SK-N-SH (cell line): ENCODE measurements at regions of chr17 and their contacts with region 1.

Region 1: DNA sequence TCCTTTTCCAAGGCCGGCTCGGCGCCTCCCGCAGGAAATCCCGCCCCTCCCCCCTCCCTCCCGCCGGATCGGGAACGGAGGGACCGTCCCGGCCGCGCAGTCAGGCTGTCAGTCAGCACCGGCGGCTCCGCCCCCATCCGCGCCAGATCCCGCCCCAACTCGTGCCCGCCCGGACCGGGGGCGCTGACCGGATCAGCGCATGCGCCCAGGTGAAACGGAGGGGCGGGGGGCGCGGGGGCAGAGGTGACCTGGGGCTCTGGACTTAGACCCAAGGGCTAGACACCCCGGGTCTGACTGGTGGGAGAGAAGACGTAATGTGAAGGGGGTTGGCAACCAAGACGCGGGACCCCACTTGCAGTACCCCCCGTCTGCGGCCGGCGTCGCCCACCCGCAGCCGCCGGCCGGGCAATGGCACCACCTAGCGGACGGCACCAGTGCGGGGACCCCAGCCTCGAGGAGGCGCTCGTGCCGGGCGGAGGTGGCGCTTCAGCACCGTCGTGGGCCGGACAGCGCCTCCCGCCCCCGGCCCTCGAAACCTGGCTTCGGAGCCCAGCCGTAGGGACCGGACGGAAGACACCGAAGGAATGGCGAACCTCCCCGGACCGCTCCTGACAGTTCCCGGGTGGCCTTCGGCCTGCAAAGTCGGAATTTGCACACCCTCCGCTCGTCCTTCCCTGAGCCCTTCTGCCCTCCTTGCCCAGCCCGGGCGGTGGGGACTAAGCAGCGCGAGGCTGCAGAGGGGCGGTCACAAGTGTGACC is at the start of gene CASKIN2:
- DNase-seq: peak; percentile 100
- H3K4me3 ChIP-seq: peak within 1 kb of the TSS; percentile 81 to 98
- H3K27ac ChIP-seq: peak within 1 kb of the TSS; percentile 45 to 88; a peak in 3 of 4 replicates
- H3K4me1 ChIP-seq: peaks cover 0 to 33% of the 10 kb centered on the region in 2 experiments; a peak in 1 of 4 replicates
- H3K27me3 ChIP-seq: no peaks in the 10 kb centered on the region
- CTCF ChIP-seq: peak; percentile 100
- EP300 ChIP-seq: no peak; a peak in 1 of 4 replicates
- RAD21 ChIP-seq: peak; percentile 71
- polyA plus RNA-seq, gene CASKIN2: 5.2 and 6.5 TPM in 2 replicates

Region 2: DNA sequence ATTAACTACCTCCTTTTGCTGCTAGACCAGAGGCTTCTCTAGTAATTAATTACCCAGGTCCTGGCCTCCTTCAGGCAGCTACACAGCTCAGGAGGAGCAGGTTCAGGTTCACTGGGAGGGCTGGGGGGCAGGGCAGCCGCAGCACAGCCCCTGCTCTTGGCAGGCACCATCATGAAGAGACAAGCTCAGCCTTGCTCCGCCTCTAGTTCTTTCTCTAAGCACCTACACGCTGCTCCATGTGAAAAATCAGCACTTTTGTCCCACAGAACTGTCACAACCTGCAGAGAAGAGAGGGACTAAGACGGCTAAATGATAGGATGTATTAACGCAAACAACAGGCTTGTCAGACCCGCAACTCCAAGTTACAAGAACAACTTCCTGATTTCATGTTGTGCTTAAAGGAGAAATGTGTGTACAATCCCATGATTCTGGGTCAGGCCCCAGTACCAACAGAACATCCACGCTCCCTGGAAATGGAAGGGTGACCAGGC is 163.6 kb before region 1 on chr17:
- CTCF ChIA-PET with region 1: no interaction called
- POLR2A ChIA-PET with region 1: no interaction called
- DNase-seq: peak; percentile 30
- H3K4me3 ChIP-seq: no peak overlapping the region
- H3K27ac ChIP-seq: no peak overlapping the region; a peak in 1 of 4 replicates
- H3K4me1 ChIP-seq: peaks cover 6 to 8% of the 10 kb centered on the region in 2 experiments; a peak in 1 of 4 replicates
- H3K27me3 ChIP-seq: no peaks in the 10 kb centered on the region
- CTCF ChIP-seq: no peak
- EP300 ChIP-seq: no peak
- RAD21 ChIP-seq: no peak

Region 3: DNA sequence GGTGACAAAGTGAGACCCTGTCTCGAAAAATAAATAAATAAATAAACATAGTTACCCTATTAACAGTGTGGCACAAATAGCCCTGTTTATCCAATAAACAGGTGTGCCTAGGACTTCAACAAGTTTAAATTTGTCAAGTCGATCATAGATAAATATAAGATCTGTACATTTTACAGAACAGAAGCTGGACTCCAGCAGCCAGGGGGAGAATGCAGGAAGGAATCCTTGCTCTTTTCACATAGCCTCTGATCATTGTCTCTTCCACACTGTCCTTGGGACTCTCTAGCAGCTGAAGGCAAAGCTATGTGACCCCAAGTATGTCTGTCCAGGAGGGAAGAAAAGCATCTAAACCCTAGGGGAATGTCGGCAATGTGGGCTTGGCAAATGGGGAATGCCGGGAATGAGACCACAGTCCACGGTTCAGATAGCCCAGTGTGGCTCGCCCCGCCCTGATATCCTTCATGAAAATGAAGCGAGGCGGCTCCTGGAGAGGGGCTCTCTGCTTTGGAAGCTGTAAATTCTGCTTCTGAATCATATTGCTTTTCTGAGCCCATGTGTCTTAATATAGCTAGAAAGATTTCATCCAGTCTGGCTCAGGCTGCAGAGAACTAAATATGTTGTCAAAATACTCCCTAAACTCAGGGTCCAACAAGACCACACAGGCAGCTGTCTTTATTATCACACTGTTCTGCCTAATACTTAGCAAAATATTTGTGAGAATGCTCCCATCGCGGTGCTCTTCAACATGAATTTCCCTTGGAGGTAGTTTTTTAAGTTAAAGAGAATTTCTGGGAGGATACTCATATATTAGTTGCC is 85.3 kb before region 1 on chr17:
- CTCF ChIA-PET with region 1: interaction called, 26 read pairs
- POLR2A ChIA-PET with region 1: no interaction called
- DNase-seq: no peak
- H3K4me3 ChIP-seq: no peak overlapping the region
- H3K27ac ChIP-seq: no peak overlapping the region
- H3K4me1 ChIP-seq: no peaks in the 10 kb centered on the region; a peak in 1 of 4 replicates
- H3K27me3 ChIP-seq: no peaks in the 10 kb centered on the region
- CTCF ChIP-seq: no peak
- EP300 ChIP-seq: no peak
- RAD21 ChIP-seq: no peak

Region 4: GRCh38 chr17:75440738-75441448 is 74.8 kb before region 1 on chr17:
- CTCF ChIA-PET with region 1: no interaction called
- POLR2A ChIA-PET with region 1: no interaction called
- DNase-seq: no peak
- H3K4me3 ChIP-seq: no peak overlapping the region
- H3K27ac ChIP-seq: no peak overlapping the region
- H3K4me1 ChIP-seq: no peaks in the 10 kb centered on the region
- H3K27me3 ChIP-seq: no peaks in the 10 kb centered on the region
- CTCF ChIP-seq: no peak
- EP300 ChIP-seq: no peak
- RAD21 ChIP-seq: no peak

Region 5: GRCh38 chr17:75456417-75457046 is 59.1 kb before region 1 on chr17 and contains the start of gene TMEM94:
- CTCF ChIA-PET with region 1: interaction called, 13 read pairs
- POLR2A ChIA-PET with region 1: interaction called, 15 read pairs
- DNase-seq: peak; percentile 98
- H3K4me3 ChIP-seq: peak within 1 kb of the TSS; percentile 74 to 82
- H3K27ac ChIP-seq: peak within 1 kb of the TSS; percentile 90 to 94
- H3K4me1 ChIP-seq: peaks cover 0 to 15% of the 10 kb centered on the region in 2 experiments; a peak in 3 of 4 replicates
- H3K27me3 ChIP-seq: no peaks in the 10 kb centered on the region
- CTCF ChIP-seq: no peak
- EP300 ChIP-seq: no peak
- RAD21 ChIP-seq: no peak
- polyA plus RNA-seq, gene TMEM94: 68.0 and 89.9 TPM in 2 replicates

Region 6: DNA sequence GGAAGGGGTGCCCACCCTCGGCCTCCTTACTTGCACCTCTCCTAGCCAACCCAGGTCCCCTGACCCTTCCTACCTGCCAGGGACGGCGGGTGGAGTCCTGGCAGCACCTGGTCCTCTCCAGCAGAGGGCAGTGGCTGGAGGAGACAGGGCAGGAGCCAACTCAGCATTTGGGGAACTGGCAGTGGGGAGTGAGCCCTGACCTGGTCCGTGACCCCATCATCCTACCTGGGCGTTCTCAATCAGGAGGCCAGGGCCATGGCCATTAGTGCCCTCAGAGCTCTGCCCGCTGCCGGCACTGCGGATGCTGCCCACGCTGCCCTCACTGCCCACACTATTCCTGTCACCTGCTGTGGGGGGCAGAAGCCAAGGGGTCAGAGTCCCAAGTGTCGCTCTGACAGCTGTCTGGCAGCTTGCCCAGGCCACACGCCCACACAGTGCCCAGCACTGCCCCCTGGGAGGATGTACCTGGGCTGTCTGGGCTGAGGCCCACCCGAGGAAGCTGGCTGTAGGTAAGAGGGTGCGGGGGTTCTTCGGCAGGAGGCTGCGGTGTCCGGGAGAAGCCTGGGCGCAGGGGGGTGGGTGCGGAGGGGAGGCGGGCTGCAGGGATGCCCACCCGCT is 11.2 kb before region 1 on chr17:
- CTCF ChIA-PET with region 1: interaction called, 37 read pairs
- POLR2A ChIA-PET with region 1: interaction called, 10 read pairs
- DNase-seq: peak; percentile 86
- H3K4me3 ChIP-seq: no peak overlapping the region
- H3K27ac ChIP-seq: no peak overlapping the region
- H3K4me1 ChIP-seq: peaks cover 5 to 6% of the 10 kb centered on the region in 2 experiments; a peak in 1 of 4 replicates
- H3K27me3 ChIP-seq: no peaks in the 10 kb centered on the region
- CTCF ChIP-seq: peak; percentile 67
- EP300 ChIP-seq: no peak
- RAD21 ChIP-seq: peak; percentile 49

Region 7: GRCh38 chr17:75589012-75589918 is 73.6 kb after region 1 on chr17:
- CTCF ChIA-PET with region 1: interaction called, 10 read pairs
- POLR2A ChIA-PET with region 1: no interaction called
- DNase-seq: peak; percentile 100
- H3K4me3 ChIP-seq: peak overlapping the region; percentile 62 to 64
- H3K27ac ChIP-seq: peak overlapping the region in 1 of 2 experiments; percentile 53; a peak in 1 of 4 replicates
- H3K4me1 ChIP-seq: peaks cover 0 to 16% of the 10 kb centered on the region in 2 experiments; a peak in 1 of 4 replicates
- H3K27me3 ChIP-seq: no peaks in the 10 kb centered on the region
- CTCF ChIP-seq: peak; percentile 60
- EP300 ChIP-seq: peak in 1 of 2 experiments; percentile 68; a peak in 1 of 4 replicates
- RAD21 ChIP-seq: peak; percentile 34